Activated T-helper 1 cell treated with anti-CD3 and anti-CD28 coated beads, Interleukin-12 subunit alpha, Interleukin-12 subunit beta, Interleukin-2, Interleukin-4 antibody, amounts not matched to agents 30 ng/mL and 10 ng/mL and 1 ng/mL, durations not matched to agents 14 hours and 24 hours and 36 hours (primary cell): ENCODE measurements at regions of chr5 and their contacts with region 1.

Region 1: GRCh38 chr5:75053304-75054133 is 1.2 kb upstream of the GCNT4 start:
- DNase-seq: peak; percentile 43
- H3K4me3 Mint-ChIP-seq: peak overlapping the region; percentile 86
- H3K27ac Mint-ChIP-seq: peak overlapping the region; percentile 75
- H3K4me1 Mint-ChIP-seq: peaks cover 58% of the 10 kb centered on the region
- H3K27me3 Mint-ChIP-seq: peaks cover 19% of the 10 kb centered on the region

Region 2: DNA sequence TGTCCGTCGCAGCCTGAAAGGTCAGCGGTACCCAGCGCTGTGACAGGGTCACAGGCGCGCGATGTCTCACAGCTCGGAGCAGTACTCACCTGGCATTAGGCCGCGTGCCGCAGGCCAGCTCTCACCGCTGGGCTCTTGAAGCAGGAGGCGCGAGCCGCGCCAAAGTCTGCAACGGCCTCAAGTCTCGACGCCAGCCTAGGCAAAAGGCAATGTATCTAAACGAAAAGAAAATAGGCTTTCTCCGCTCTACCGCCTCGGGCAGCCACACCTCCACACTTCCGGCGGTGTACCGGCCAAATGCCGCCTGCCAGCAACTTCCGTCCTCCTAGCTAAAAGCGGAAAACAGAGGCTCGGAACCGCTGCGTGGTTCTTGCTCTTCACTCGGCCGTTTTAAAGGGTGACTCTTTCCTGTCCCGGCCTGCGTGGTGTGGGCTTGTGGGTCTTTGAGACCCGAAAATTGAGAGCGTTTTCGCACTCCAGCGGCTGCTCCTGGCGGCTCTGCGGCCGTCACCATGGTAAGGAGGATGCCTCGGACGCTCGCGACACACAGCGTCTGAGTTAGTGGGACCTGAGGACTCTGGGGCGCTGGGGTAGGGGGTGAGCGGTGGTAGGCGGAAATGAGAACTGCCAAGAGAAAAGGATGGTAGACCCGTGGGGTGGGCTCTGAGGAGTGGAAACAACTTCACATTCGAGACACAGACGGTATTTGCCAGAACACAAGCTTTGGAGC is 286.5 kb before region 1 on chr5 and contains the starts of genes GFM2 and NSA2:
- intact Hi-C with region 1: loop called (anchors 2 kb)
- DNase-seq: peak; percentile 91
- H3K4me3 Mint-ChIP-seq: peak within 1 kb of the TSS; percentile 98
- H3K27ac Mint-ChIP-seq: peak within 1 kb of the TSS; percentile 98
- H3K4me1 Mint-ChIP-seq: peaks cover 17% of the 10 kb centered on the region
- H3K27me3 Mint-ChIP-seq: no peaks in the 10 kb centered on the region
- total RNA-seq, gene GFM2: 32.4 and 35.5 TPM in 2 replicates
- total RNA-seq, gene NSA2: 89.0 and 94.9 TPM in 2 replicates

Region 3: GRCh38 chr5:75006865-75007822 is 46.4 kb before region 1 on chr5:
- intact Hi-C with region 1: no loop called
- DNase-seq: no peak
- H3K4me3 Mint-ChIP-seq: no peak overlapping the region
- H3K27ac Mint-ChIP-seq: no peak overlapping the region
- H3K4me1 Mint-ChIP-seq: no peaks in the 10 kb centered on the region
- H3K27me3 Mint-ChIP-seq: peaks cover 2% of the 10 kb centered on the region

Region 4: DNA sequence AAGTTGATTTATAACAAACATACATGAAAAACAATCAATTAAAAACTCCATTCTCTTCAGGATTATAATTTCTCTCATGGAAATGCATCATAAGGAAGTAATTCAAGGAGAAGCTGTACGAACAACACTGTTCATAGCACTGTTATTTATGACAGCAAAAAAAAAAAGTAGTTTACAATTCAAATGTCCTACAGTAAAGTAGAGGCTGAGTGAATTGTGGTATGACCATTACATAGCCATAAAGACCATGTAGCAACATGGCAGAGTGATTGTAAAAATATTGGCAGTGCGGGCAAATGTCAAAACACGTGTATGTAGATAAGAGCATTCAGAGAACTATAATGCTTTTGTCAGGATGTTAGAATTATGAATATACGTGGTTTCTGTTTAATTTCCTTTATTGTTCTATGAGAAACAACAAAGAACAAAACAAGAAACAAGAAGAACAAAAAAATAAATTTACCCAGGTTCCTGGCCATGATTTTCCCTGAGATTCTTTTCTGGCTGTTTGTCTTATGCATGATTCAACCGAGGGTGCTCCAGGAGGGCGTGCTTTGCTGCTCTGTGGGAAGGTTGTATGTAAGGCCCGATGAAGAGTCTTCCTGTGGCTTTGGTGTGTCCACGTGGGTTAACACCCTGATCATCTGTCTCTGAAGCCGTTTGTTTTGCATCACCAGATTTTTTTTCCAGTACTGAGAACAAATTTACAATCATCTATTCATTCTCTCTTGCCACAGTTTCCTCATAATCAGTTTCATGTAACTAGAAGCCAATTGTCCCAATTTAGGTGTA is 30.0 kb before region 1 on chr5:
- intact Hi-C with region 1: loop called (anchors 2 kb)
- DNase-seq: peak; percentile 3
- H3K4me3 Mint-ChIP-seq: no peak overlapping the region
- H3K27ac Mint-ChIP-seq: peak overlapping the region; percentile 27
- H3K4me1 Mint-ChIP-seq: peaks cover 25% of the 10 kb centered on the region
- H3K27me3 Mint-ChIP-seq: no peaks in the 10 kb centered on the region

Region 5: GRCh38 chr5:75167345-75167744 is 113.8 kb after region 1 on chr5:
- intact Hi-C with region 1: no loop called
- DNase-seq: no peak
- H3K4me3 Mint-ChIP-seq: no peak overlapping the region
- H3K27ac Mint-ChIP-seq: no peak overlapping the region
- H3K4me1 Mint-ChIP-seq: no peaks in the 10 kb centered on the region
- H3K27me3 Mint-ChIP-seq: no peaks in the 10 kb centered on the region

Region 6: GRCh38 chr5:75265731-75266130 is 212.2 kb after region 1 on chr5:
- intact Hi-C with region 1: loop called (anchors 1 kb)
- DNase-seq: no peak
- H3K4me3 Mint-ChIP-seq: no peak overlapping the region
- H3K27ac Mint-ChIP-seq: no peak overlapping the region
- H3K4me1 Mint-ChIP-seq: no peaks in the 10 kb centered on the region
- H3K27me3 Mint-ChIP-seq: peaks cover 5% of the 10 kb centered on the region

Region 7: GRCh38 chr5:75566710-75567309 is 513.3 kb after region 1 on chr5:
- intact Hi-C with region 1: loop called (anchors 5 kb)
- DNase-seq: peak; percentile 39
- H3K4me3 Mint-ChIP-seq: peak overlapping the region; percentile 29
- H3K27ac Mint-ChIP-seq: peak overlapping the region; percentile 81
- H3K4me1 Mint-ChIP-seq: peaks cover 53% of the 10 kb centered on the region
- H3K27me3 Mint-ChIP-seq: no peaks in the 10 kb centered on the region

Region 8: GRCh38 chr5:75717082-75717922 is 663.8 kb after region 1 on chr5 and contains the start of gene POC5:
- intact Hi-C with region 1: loop called (anchors 2 kb)
- DNase-seq: peak; percentile 98
- H3K4me3 Mint-ChIP-seq: peak within 1 kb of the TSS; percentile 98
- H3K27ac Mint-ChIP-seq: peak within 1 kb of the TSS; percentile 100
- H3K4me1 Mint-ChIP-seq: peaks cover 34% of the 10 kb centered on the region
- H3K27me3 Mint-ChIP-seq: peaks cover 3% of the 10 kb centered on the region
- total RNA-seq, gene POC5: 20.7 and 24.2 TPM in 2 replicates

Region 9: GRCh38 chr5:76204719-76205118 is 1151.2 kb after region 1 on chr5:
- intact Hi-C with region 1: no loop called
- DNase-seq: no peak
- H3K4me3 Mint-ChIP-seq: no peak overlapping the region
- H3K27ac Mint-ChIP-seq: no peak overlapping the region
- H3K4me1 Mint-ChIP-seq: no peaks in the 10 kb centered on the region
- H3K27me3 Mint-ChIP-seq: peaks cover 30% of the 10 kb centered on the region